Breast epithelium (tissue), 4 donors: ENCODE measurements at regions of chr10 and their contacts with region 1.

Region 1: DNA sequence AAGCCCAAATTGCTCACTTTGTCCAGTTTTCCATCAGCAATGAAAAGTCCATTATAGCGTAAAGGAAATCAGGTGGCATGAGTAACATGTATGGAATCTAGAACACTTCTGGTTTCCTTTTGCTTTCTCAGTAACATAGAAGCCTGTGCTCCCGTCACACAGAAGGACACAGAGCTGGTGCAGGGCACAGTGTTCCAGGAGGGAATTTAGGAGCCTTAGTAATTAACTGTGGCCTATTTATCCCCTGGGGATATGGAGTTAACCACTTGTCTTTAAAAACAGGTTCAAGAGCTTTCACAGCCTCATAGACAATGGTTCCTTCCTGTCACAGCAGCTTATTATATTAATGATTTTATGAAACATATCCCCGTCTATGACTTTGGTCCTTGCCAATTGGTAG is 189.9 kb downstream of the NEBL start:
- DNase-seq: no peak
- H3K4me3 ChIP-seq: no peak overlapping the region
- H3K27ac ChIP-seq: no peak overlapping the region
- H3K4me1 ChIP-seq: no peaks in the 10 kb centered on the region
- H3K27me3 ChIP-seq: no peaks in the 10 kb centered on the region
- CTCF ChIP-seq: no peak
- POLR2A ChIP-seq: no peak

Region 2: GRCh38 chr10:19498393-19499290 is 1208.6 kb before region 1 on chr10:
- intact Hi-C with region 1: loop called (anchors 10 kb)
- DNase-seq: no peak
- H3K4me3 ChIP-seq: no peak overlapping the region
- H3K27ac ChIP-seq: peak overlapping the region in 1 of 2 donors; percentile 69
- H3K4me1 ChIP-seq: no peaks in the 10 kb centered on the region
- H3K27me3 ChIP-seq: no peaks in the 10 kb centered on the region
- CTCF ChIP-seq: no peak
- POLR2A ChIP-seq: no peak